Activated CD8-positive, alpha-beta T cell treated with anti-CD3 and anti-CD28 coated beads for 36 hours (primary cell): ENCODE measurements at regions of chr10 and their contacts with region 1.

Region 1: GRCh38 chr10:91006001-91006751 is 85.3 kb upstream of the ANKRD1 start:
- DNase-seq: peak; percentile 81
- ATAC-seq: peak; percentile 81
- H3K4me3 Mint-ChIP-seq: no peak overlapping the region
- H3K27ac Mint-ChIP-seq: peak overlapping the region; percentile 76
- H3K4me1 Mint-ChIP-seq: peaks cover 41% of the 10 kb centered on the region
- H3K27me3 Mint-ChIP-seq: peaks cover 4% of the 10 kb centered on the region
- CTCF ChIP-seq: peak; percentile 93

Region 2: DNA sequence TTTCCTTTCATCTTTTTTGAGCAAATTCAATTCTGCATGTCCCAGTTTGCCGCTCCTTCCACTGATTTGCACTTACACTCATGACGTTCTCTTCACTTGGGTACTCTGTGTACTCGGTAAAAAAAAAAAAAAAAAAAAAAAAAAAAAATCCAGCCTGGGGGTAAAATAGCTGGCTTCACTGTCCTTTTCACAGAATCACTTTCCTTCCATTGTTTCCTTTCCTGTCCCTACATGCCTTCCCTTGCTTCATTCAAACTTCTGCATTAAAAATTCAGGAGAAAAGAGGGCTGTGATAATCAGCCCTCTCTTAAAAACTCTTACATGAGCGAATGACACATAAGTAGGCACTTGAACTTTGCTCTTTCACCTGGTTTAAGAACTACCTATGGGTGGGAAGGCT is 94.0 kb before region 1 on chr10:
- CTCF ChIA-PET with region 1: interaction called, 21 read pairs
- POLR2A ChIA-PET with region 1: no interaction called
- intact Hi-C with region 1: no loop called
- DNase-seq: no peak
- ATAC-seq: no peak
- H3K4me3 Mint-ChIP-seq: no peak overlapping the region
- H3K27ac Mint-ChIP-seq: no peak overlapping the region
- H3K4me1 Mint-ChIP-seq: peaks cover 2% of the 10 kb centered on the region
- H3K27me3 Mint-ChIP-seq: no peaks in the 10 kb centered on the region
- CTCF ChIP-seq: no peak

Region 3: DNA sequence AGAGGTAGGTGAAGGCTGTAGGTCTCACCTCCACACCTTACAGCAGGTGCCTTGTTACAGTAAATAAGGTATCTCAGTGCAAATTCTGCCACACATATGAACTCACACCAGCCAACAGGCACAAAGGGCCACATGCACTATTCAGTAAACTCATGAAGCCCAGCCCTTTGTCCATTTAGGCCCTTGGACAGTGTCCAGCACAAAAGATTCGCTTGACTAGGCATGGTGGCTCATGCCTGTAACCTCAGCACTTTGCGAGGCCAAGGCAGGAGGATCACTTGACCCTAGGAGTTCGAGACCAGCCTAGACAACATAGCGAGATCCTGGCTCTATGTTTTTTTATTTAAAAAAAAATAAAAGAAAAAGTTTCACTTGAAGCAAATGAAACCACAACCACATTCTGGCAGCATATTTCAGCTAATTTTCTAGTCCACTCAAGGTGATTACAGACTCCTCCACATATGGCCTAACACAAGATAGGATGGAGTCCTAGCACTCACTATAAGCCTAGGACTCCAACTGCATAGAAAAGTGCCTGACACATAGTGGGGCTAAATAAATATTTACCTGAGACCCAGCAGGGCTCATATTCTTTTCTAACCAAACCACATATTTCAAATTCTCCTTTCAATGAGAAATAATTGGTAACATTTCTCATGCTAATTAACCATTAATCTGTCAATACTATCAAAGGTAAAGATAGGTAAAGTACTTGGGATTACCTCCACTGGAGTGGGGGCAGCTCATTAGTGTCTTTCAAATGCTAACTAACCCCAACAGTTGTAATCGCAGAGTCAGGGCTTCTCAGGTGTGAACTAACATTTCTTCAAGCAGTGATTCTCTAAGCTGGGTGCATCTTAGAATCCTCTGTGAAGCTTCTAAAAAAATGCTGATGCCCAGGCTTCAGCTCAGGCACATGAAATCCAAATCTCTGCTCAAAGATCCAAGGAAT is 80.8 kb before region 1 on chr10:
- CTCF ChIA-PET with region 1: no interaction called
- POLR2A ChIA-PET with region 1: no interaction called
- intact Hi-C with region 1: no loop called
- DNase-seq: no peak
- ATAC-seq: no peak
- H3K4me3 Mint-ChIP-seq: no peak overlapping the region
- H3K27ac Mint-ChIP-seq: no peak overlapping the region
- H3K4me1 Mint-ChIP-seq: no peaks in the 10 kb centered on the region
- H3K27me3 Mint-ChIP-seq: peaks cover 14% of the 10 kb centered on the region
- CTCF ChIP-seq: no peak

Region 4: DNA sequence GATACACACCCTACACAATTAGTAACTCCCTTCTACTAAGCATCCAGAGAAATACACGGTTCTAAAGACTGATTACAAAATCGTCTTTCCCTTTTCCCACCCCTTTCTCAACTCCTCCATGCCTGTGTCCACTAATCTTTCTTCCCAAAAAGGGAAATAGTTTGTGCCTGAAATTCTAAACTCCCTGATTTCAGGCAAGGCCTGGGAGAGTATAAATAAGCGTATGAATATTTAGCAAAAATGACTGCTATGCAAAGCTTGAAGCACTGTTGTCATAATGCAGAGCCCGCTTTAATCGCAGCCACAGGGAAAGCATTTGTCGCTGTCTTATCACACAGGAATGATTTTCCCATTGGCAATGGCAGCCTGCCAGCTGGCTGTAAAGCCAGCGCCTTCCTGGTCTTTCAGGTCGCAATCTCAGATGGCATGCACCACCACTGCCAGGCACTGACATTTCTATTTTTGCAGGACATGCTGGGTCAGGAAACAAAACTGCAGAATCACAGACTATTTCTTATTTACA is 71.4 kb after region 1 on chr10:
- CTCF ChIA-PET with region 1: interaction called, 16 read pairs
- POLR2A ChIA-PET with region 1: no interaction called
- intact Hi-C with region 1: no loop called
- DNase-seq: no peak
- ATAC-seq: no peak
- H3K4me3 Mint-ChIP-seq: no peak overlapping the region
- H3K27ac Mint-ChIP-seq: no peak overlapping the region
- H3K4me1 Mint-ChIP-seq: no peaks in the 10 kb centered on the region
- H3K27me3 Mint-ChIP-seq: peaks cover 3% of the 10 kb centered on the region
- CTCF ChIP-seq: no peak

Region 5: DNA sequence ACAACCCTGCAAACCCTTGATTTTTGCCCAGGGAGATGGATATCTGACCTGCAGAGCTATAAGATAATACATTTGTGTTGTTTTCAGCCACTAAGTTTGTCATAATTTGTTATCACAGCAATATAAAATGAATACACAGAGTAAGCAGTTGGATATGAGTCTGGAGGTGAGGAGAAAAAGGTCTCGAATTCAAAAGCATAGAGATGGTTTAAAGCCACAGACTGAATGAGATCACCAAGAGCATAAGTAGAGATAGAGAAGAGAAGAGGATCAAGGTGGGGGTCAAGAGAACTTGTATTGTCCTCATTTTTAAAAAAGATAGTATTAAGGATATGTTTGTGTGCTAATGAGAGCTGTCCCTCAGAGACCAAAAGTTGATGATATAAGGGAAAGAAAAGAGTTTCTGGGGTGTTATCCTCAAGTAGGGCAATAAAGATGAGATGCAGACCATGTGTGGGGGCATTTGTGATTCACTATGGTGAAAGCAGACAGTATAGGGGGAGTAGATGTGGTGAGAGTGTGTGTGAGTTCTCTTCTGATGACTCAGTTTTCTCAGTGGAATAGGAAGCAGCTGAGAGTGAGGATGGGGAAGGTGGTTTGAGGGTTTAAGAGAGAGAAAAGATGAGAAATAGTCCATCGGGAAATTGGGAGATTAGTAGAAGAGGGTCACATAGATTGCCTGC is 188.5 kb after region 1 on chr10:
- CTCF ChIA-PET with region 1: interaction called, 6 read pairs
- POLR2A ChIA-PET with region 1: no interaction called
- intact Hi-C with region 1: loop called (anchors 2 kb)
- DNase-seq: peak; percentile 60
- ATAC-seq: peak; percentile 83
- H3K4me3 Mint-ChIP-seq: no peak overlapping the region
- H3K27ac Mint-ChIP-seq: peak overlapping the region; percentile 69
- H3K4me1 Mint-ChIP-seq: peaks cover 85% of the 10 kb centered on the region
- H3K27me3 Mint-ChIP-seq: no peaks in the 10 kb centered on the region
- CTCF ChIP-seq: no peak

Region 6: DNA sequence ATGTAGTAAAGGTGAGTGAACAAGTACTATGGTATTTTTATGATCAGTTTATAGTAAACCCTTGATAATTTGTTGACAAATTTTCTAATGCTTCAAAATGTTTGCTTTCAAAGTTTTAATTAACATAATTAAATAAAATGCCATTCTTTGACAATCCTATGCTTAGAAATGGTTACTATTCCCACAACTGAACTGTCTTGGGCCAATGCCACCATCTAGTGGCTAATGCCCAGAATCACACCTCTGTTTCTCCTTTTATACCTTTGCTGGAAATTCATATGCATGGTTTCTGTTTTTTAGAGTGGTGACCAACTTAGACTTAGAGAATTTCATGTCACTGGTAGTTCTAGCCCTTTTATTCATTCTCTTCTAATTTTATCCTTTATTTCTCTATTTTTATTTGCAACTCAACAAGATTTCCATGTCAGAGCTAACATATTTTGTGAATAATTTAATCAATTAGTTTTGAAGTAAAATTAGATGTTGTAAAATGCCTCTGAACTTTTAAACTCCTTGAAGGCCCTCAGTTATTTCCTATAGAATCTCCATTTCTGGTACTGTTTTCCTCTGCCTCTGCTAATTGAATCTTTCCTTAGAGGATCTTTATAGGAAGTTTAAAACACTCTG is 245.4 kb after region 1 on chr10:
- CTCF ChIA-PET with region 1: interaction called, 184 read pairs
- POLR2A ChIA-PET with region 1: interaction called, 11 read pairs
- intact Hi-C with region 1: loop called (anchors 2 kb)
- DNase-seq: peak; percentile 52
- ATAC-seq: peak; percentile 73
- H3K4me3 Mint-ChIP-seq: no peak overlapping the region
- H3K27ac Mint-ChIP-seq: no peak overlapping the region
- H3K4me1 Mint-ChIP-seq: peaks cover 4% of the 10 kb centered on the region
- H3K27me3 Mint-ChIP-seq: no peaks in the 10 kb centered on the region
- CTCF ChIP-seq: peak; percentile 93